Natural killer cell (primary cell): ENCODE measurements at regions of chr16 and their contacts with region 1.

Region 1: DNA sequence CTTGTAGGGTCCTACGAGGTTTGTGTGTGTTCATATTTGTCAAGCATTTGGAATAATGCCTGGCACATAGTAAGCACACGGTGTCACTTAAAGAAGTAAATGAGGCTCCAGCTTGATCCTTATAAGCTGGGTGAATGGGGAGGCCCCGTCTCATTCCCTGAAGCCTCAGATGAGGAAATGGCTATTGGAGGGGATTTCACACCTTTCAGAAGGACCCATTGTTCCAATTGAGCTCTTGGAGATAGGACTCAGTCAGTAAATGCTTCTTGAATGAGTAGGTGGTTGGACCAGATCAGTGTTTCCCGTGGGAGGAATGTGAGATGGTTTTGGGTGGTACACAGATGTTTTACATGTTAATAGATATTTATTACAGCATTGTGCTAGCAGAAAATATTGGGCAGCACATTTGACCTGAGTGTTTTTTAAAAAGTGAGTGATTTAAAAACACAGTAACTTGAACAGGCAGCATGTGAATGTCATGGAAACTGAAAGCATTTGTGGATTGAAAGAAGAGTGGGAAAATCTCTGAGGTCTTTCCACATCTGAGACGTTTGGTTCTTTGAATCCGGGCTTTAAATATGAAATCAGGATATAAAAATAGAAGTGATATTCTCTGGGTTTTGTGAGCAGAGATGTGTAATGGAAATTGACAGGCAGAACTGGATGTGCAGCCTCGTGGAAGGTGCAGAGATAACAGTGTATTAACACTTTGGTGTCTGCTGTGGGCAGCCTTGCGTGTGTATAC is 36.4 kb upstream of the ARHGAP17 start:
- DNase-seq: peak in 1 of 2 donors; percentile 20
- ATAC-seq: no peak
- H3K4me3 ChIP-seq: no peak overlapping the region
- H3K4me3 Mint-ChIP-seq: no peak overlapping the region
- H3K27ac ChIP-seq: no peak overlapping the region
- H3K27ac Mint-ChIP-seq: peak overlapping the region; percentile 71 to 98
- H3K4me1 ChIP-seq: peaks cover 29% of the 10 kb centered on the region
- H3K4me1 Mint-ChIP-seq: peaks cover 26 to 31% of the 10 kb centered on the region in 2 donors
- H3K27me3 ChIP-seq: no peaks in the 10 kb centered on the region
- H3K27me3 Mint-ChIP-seq: no peaks in the 10 kb centered on the region
- CTCF ChIP-seq: no peak

Region 2: DNA sequence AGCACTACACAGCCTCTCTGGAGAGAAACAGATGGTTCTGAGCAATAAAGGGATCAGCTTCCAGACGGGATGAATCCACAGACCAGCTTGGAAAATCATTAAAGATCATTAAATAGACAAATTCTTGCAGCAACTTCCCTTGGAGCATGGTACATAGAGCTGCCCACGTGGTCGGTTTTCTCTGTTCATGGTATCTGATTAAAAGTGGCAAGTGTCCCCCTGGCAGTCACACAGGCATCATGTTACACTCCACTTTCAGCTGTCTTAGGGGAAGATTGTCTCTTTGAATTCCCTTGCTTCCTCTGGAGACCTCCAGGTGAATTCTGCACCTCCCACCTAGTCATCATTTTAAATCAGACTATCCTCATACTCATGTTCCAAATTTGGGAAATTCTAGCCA is 887.6 kb before region 1 on chr16:
- intact Hi-C with region 1: no loop called
- DNase-seq: no peak
- ATAC-seq: no peak
- H3K4me3 ChIP-seq: no peak overlapping the region
- H3K4me3 Mint-ChIP-seq: no peak overlapping the region
- H3K27ac ChIP-seq: no peak overlapping the region
- H3K27ac Mint-ChIP-seq: peak overlapping the region in 1 of 2 donors; percentile 47
- H3K4me1 ChIP-seq: no peaks in the 10 kb centered on the region
- H3K4me1 Mint-ChIP-seq: peaks cover 20 to 22% of the 10 kb centered on the region in 2 donors
- H3K27me3 ChIP-seq: no peaks in the 10 kb centered on the region
- H3K27me3 Mint-ChIP-seq: no peaks in the 10 kb centered on the region
- CTCF ChIP-seq: no peak

Region 3: GRCh38 chr16:24906199-24907020 is 145.2 kb before region 1 on chr16:
- intact Hi-C with region 1: no loop called
- DNase-seq: no peak
- ATAC-seq: no peak
- H3K4me3 ChIP-seq: no peak overlapping the region
- H3K4me3 Mint-ChIP-seq: no peak overlapping the region
- H3K27ac ChIP-seq: no peak overlapping the region
- H3K27ac Mint-ChIP-seq: no peak overlapping the region
- H3K4me1 ChIP-seq: no peaks in the 10 kb centered on the region
- H3K4me1 Mint-ChIP-seq: peaks cover 0 to 6% of the 10 kb centered on the region in 2 donors
- H3K27me3 ChIP-seq: no peaks in the 10 kb centered on the region
- H3K27me3 Mint-ChIP-seq: peaks cover 4 to 12% of the 10 kb centered on the region in 2 donors
- CTCF ChIP-seq: no peak

Region 4: GRCh38 chr16:25014500-25015147 is 37.0 kb before region 1 on chr16:
- intact Hi-C with region 1: loop called (anchors 1 kb)
- DNase-seq: peak; percentile 26 to 54
- ATAC-seq: peak; percentile 37 to 57 (median 42)
- H3K4me3 ChIP-seq: peak overlapping the region; percentile 77
- H3K4me3 Mint-ChIP-seq: peak overlapping the region; percentile 92
- H3K27ac ChIP-seq: peak overlapping the region; percentile 85
- H3K27ac Mint-ChIP-seq: peak overlapping the region; percentile 88 to 93
- H3K4me1 ChIP-seq: peaks cover 60% of the 10 kb centered on the region
- H3K4me1 Mint-ChIP-seq: peaks cover 60 to 65% of the 10 kb centered on the region in 2 donors
- H3K27me3 ChIP-seq: no peaks in the 10 kb centered on the region
- H3K27me3 Mint-ChIP-seq: no peaks in the 10 kb centered on the region
- CTCF ChIP-seq: no peak

Region 5: GRCh38 chr16:25031441-25032307 is 19.9 kb before region 1 on chr16:
- intact Hi-C with region 1: loop called (anchors 1 kb)
- DNase-seq: peak; percentile 84 to 97
- ATAC-seq: peak; percentile 100
- H3K4me3 ChIP-seq: peak overlapping the region; percentile 51
- H3K4me3 Mint-ChIP-seq: peak overlapping the region; percentile 91
- H3K27ac ChIP-seq: peak overlapping the region; percentile 55
- H3K27ac Mint-ChIP-seq: peak overlapping the region; percentile 17 to 91
- H3K4me1 ChIP-seq: peaks cover 12% of the 10 kb centered on the region
- H3K4me1 Mint-ChIP-seq: peaks cover 13 to 35% of the 10 kb centered on the region in 2 donors
- H3K27me3 ChIP-seq: no peaks in the 10 kb centered on the region
- H3K27me3 Mint-ChIP-seq: no peaks in the 10 kb centered on the region
- CTCF ChIP-seq: no peak

Region 6: GRCh38 chr16:25100511-25100910 is 48.9 kb after region 1 on chr16:
- intact Hi-C with region 1: no loop called
- DNase-seq: no peak
- ATAC-seq: no peak
- H3K4me3 ChIP-seq: no peak overlapping the region
- H3K4me3 Mint-ChIP-seq: no peak overlapping the region
- H3K27ac ChIP-seq: no peak overlapping the region
- H3K27ac Mint-ChIP-seq: no peak overlapping the region
- H3K4me1 ChIP-seq: no peaks in the 10 kb centered on the region
- H3K4me1 Mint-ChIP-seq: no peaks in the 10 kb centered on the region
- H3K27me3 ChIP-seq: no peaks in the 10 kb centered on the region
- H3K27me3 Mint-ChIP-seq: no peaks in the 10 kb centered on the region
- CTCF ChIP-seq: no peak

Region 7: DNA sequence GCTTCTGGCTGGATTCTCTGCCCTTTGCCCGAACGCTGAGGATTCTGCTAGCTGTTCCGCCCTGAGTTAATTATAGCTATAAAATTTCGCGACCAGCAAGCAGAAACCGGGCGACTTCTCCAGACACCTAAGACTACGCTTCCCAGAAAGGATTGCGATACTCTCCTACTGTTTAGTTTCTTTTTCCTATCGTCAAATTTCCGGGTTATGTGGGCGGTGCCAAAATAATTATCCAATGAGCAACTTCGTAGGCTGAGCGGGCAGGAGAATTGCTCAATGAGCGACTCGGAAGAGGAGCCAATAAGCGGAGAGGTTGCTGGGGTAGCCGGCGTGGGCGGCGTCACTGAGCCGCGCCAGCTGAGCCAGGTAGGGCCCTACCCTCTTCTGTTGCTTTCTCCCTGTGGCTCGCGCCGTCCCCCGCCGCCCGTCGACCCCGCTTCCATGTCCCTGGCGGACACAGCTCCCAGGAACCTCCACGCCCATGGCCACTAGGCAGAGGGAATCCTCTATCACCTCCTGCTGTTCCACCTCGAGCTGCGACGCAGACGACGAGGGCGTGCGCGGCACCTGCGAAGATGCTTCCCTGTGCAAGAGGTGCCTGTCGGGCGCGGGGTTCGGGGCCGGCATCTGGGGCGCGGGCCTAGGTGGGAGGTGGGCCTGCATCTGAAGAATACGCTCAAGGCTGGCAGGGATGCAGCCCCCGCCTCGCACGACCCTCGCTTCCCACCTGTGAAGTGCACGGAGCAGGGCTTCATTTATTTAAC is 60.0 kb after region 1 on chr16 and contains the start of gene LCMT1:
- intact Hi-C with region 1: loop called (anchors 1 kb)
- DNase-seq: peak; percentile 84 to 96
- ATAC-seq: peak; percentile 88 to 94 (median 89)
- H3K4me3 ChIP-seq: peak within 1 kb of the TSS; percentile 80
- H3K4me3 Mint-ChIP-seq: peak within 1 kb of the TSS; percentile 90
- H3K27ac ChIP-seq: peak within 1 kb of the TSS; percentile 56
- H3K27ac Mint-ChIP-seq: peak within 1 kb of the TSS; percentile 86 to 88
- H3K4me1 ChIP-seq: peaks cover 33% of the 10 kb centered on the region
- H3K4me1 Mint-ChIP-seq: peaks cover 64 to 67% of the 10 kb centered on the region in 2 donors
- H3K27me3 ChIP-seq: no peaks in the 10 kb centered on the region
- H3K27me3 Mint-ChIP-seq: no peaks in the 10 kb centered on the region
- CTCF ChIP-seq: no peak
- total RNA-seq, gene LCMT1: 28.8 to 49.5 (median 43.0) TPM

Region 8: GRCh38 chr16:25126820-25127232 is 75.2 kb after region 1 on chr16:
- intact Hi-C with region 1: loop called (anchors 1 kb)
- DNase-seq: peak in 1 of 2 donors; percentile 60
- ATAC-seq: peak; percentile 67 to 81 (median 77)
- H3K4me3 ChIP-seq: no peak overlapping the region
- H3K4me3 Mint-ChIP-seq: no peak overlapping the region
- H3K27ac ChIP-seq: no peak overlapping the region
- H3K27ac Mint-ChIP-seq: peak overlapping the region in 1 of 2 donors; percentile 68
- H3K4me1 ChIP-seq: peaks cover 7% of the 10 kb centered on the region
- H3K4me1 Mint-ChIP-seq: peaks cover 28 to 29% of the 10 kb centered on the region in 2 donors
- H3K27me3 ChIP-seq: no peaks in the 10 kb centered on the region
- H3K27me3 Mint-ChIP-seq: no peaks in the 10 kb centered on the region
- CTCF ChIP-seq: no peak

Region 9: GRCh38 chr16:25151996-25152395 is 100.4 kb after region 1 on chr16:
- intact Hi-C with region 1: no loop called
- DNase-seq: no peak
- ATAC-seq: no peak
- H3K4me3 ChIP-seq: no peak overlapping the region
- H3K4me3 Mint-ChIP-seq: no peak overlapping the region
- H3K27ac ChIP-seq: no peak overlapping the region
- H3K27ac Mint-ChIP-seq: no peak overlapping the region
- H3K4me1 ChIP-seq: no peaks in the 10 kb centered on the region
- H3K4me1 Mint-ChIP-seq: no peaks in the 10 kb centered on the region
- H3K27me3 ChIP-seq: no peaks in the 10 kb centered on the region
- H3K27me3 Mint-ChIP-seq: no peaks in the 10 kb centered on the region
- CTCF ChIP-seq: no peak

Region 10: GRCh38 chr16:25176081-25176480 is 124.5 kb after region 1 on chr16:
- intact Hi-C with region 1: loop called (anchors 1 kb)
- DNase-seq: peak in 1 of 2 donors; percentile 19
- ATAC-seq: no peak
- H3K4me3 ChIP-seq: no peak overlapping the region
- H3K4me3 Mint-ChIP-seq: no peak overlapping the region
- H3K27ac ChIP-seq: no peak overlapping the region
- H3K27ac Mint-ChIP-seq: no peak overlapping the region
- H3K4me1 ChIP-seq: peaks cover 9% of the 10 kb centered on the region
- H3K4me1 Mint-ChIP-seq: peaks cover 8 to 9% of the 10 kb centered on the region in 2 donors
- H3K27me3 ChIP-seq: no peaks in the 10 kb centered on the region
- H3K27me3 Mint-ChIP-seq: no peaks in the 10 kb centered on the region
- CTCF ChIP-seq: no peak

Region 11: GRCh38 chr16:25224731-25225319 is 173.2 kb after region 1 on chr16:
- intact Hi-C with region 1: loop called (anchors 1 kb)
- DNase-seq: no peak
- ATAC-seq: peak in 1 of 3 donors; percentile 7
- H3K4me3 ChIP-seq: no peak overlapping the region
- H3K4me3 Mint-ChIP-seq: no peak overlapping the region
- H3K27ac ChIP-seq: no peak overlapping the region
- H3K27ac Mint-ChIP-seq: no peak overlapping the region
- H3K4me1 ChIP-seq: no peaks in the 10 kb centered on the region
- H3K4me1 Mint-ChIP-seq: peaks cover 0 to 7% of the 10 kb centered on the region in 2 donors
- H3K27me3 ChIP-seq: no peaks in the 10 kb centered on the region
- H3K27me3 Mint-ChIP-seq: no peaks in the 10 kb centered on the region
- CTCF ChIP-seq: no peak